ENCODE measurements at regions of chr19 and their contacts with region 1.

Region 1: GRCh38 chr19:15629003-15629880 is 11.5 kb upstream of the CYP4F3 start:
- DNase-seq: peak; percentile 16
- H3K4me3 ChIP-seq: no peak overlapping the region
- H3K27ac ChIP-seq: no peak overlapping the region
- H3K4me1 ChIP-seq: peaks cover 0 to 8% (median 0%) of the 10 kb centered on the region in 3 donors
- H3K27me3 ChIP-seq: peaks cover 0 to 42% (median 0%) of the 10 kb centered on the region in 4 donors
- CTCF ChIP-seq: peak; percentile 90 to 99 (median 99)
- POLR2A ChIP-seq: peak in 1 of 4 donors; percentile 7

Region 2: DNA sequence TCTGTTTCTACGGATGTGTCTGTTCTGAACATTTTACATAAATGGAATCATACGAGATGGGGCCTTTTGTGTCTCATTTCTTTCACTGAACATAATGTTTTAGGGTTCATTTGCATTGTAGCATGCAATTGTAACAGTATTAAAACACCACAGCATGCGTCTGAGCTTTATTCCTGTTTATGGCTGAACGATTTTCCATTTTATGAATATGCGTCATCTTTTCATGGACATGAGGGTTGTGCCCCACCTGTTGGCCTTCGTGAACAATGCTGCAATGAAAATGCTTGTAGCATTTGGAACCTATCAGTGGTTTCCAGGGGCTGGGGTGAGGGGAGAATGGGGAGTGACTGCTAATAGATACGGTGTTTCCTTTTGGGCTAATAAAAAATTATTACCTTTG is 181.1 kb after region 1 on chr19:
- intact Hi-C with region 1: loop called (anchors 5 kb)
- DNase-seq: no peak
- H3K4me3 ChIP-seq: peak overlapping the region in 1 of 4 donors; percentile 14
- H3K27ac ChIP-seq: no peak overlapping the region
- H3K4me1 ChIP-seq: peaks cover 0 to 9% (median 0%) of the 10 kb centered on the region in 3 donors
- H3K27me3 ChIP-seq: peaks cover 0 to 45% (median 0%) of the 10 kb centered on the region in 4 donors
- CTCF ChIP-seq: peak; percentile 23 to 59 (median 44)
- POLR2A ChIP-seq: no peak

Region 3: DNA sequence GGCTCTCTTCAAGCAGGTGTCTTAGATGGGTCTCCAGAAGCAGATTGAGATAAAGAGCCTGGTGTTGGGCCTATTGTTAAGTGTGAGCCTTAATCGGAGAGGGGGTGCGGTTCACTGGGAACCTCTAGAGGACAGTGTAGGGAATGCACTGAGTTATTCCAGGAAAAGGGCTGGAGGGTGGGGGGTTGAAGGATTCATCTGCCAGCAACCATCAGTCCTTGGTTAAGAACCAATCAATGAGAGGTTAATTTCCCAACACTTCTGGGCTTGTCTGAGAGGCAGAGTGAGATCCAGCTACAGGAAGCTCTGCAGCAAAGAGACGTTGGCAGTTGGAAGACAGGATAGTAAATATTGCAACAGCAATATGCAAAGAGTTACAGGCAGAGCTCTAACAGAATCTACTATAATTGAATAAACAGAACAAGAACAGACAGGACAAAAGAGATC is 239.9 kb after region 1 on chr19:
- intact Hi-C with region 1: loop called (anchors 10 kb)
- DNase-seq: no peak
- H3K4me3 ChIP-seq: no peak overlapping the region
- H3K27ac ChIP-seq: peak overlapping the region in 3 of 4 donors; percentile 48 to 66 (median 59)
- H3K4me1 ChIP-seq: peaks cover 0 to 29% (median 3%) of the 10 kb centered on the region in 3 donors
- H3K27me3 ChIP-seq: peaks cover 0 to 32% (median 0%) of the 10 kb centered on the region in 4 donors
- CTCF ChIP-seq: peak; percentile 32 to 86 (median 68)
- POLR2A ChIP-seq: no peak

Region 4: DNA sequence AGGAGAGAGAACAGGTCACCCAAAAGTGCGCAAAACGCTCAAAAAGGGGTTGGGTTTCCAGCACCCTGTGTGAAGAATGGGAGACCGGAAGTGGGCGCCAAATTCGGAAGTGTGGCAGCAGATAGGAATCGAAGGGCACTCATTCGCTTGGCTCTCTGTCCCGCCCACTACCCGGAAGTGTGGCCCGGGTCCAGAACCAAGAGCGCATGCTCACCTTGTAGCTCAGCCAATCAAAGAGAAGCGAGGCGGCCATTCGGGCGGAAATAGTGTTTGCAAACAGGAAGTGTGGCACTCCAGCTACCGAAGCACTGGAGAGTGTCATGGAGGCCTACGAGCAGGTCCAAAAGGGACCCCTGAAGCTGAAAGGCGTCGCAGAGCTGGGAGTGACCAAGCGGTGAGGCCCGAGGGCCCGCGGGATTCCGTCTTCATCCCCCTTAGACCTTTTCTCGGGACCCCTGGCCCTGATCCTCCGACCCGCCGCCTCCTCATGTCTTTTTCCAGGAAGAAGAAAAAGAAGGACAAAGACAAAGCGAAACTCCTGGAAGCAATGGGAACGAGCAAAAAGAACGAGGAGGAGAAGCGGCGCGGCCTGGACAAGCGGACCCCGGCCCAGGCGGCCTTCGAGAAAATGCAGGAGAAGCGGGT is 556.0 kb after region 1 on chr19 and contains the start of gene FAM32A:
- intact Hi-C with region 1: loop called (anchors 10 kb)
- DNase-seq: peak; percentile 97
- H3K4me3 ChIP-seq: peak within 1 kb of the TSS; percentile 52 to 95 (median 84)
- H3K27ac ChIP-seq: peak within 1 kb of the TSS; percentile 84 to 93 (median 85)
- H3K4me1 ChIP-seq: peaks cover 12 to 49% (median 13%) of the 10 kb centered on the region in 3 donors
- H3K27me3 ChIP-seq: no peaks in the 10 kb centered on the region
- CTCF ChIP-seq: peak in 5 of 6 experiments; percentile 39 to 81 (median 43)
- POLR2A ChIP-seq: peak in 3 of 4 donors; percentile 72 to 81 (median 73)
- total RNA-seq, gene FAM32A: 53.5 to 97.4 (median 70.8) TPM